Adrenal gland (tissue), 19 donors: ENCODE measurements at regions of chr5 and their contacts with region 1.

Region 1: GRCh38 chr5:16791036-16791705 is 144.9 kb downstream of the MYO10 start:
- DNase-seq: peak in 3 of 7 donors; percentile 33 to 44 (median 35)
- H3K4me3 ChIP-seq: no peak overlapping the region
- H3K27ac ChIP-seq: no peak overlapping the region
- H3K4me1 ChIP-seq: no peaks in the 10 kb centered on the region
- H3K27me3 ChIP-seq: no peaks in the 10 kb centered on the region
- CTCF ChIP-seq: peak; percentile 63 to 83 (median 71)
- POLR2A ChIP-seq: no peak

Region 2: DNA sequence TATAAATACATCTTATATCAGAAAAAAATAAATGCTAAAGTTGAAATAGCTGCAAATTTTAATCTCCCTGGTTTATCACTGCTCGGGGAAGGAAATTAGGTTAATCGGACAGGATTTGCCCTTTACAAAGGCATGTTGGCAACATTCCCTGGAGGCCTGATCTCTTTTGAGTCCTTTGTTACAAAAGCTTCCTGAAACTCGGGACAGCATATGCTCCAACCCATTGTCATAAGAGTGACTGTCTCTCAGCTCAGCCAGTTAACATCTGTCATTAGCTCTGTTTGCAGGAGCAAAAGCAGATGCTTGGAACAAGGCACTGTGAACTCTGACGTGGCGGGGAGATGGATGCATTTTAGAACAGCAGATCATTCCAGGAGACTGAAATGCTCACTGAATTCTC is 64.3 kb after region 1 on chr5:
- intact Hi-C with region 1: no loop called
- DNase-seq: peak; percentile 21 to 68 (median 42)
- H3K4me3 ChIP-seq: no peak overlapping the region
- H3K27ac ChIP-seq: no peak overlapping the region
- H3K4me1 ChIP-seq: peaks cover 0 to 13% of the 10 kb centered on the region in 2 donors
- H3K27me3 ChIP-seq: no peaks in the 10 kb centered on the region
- CTCF ChIP-seq: no peak
- POLR2A ChIP-seq: no peak

Region 3: DNA sequence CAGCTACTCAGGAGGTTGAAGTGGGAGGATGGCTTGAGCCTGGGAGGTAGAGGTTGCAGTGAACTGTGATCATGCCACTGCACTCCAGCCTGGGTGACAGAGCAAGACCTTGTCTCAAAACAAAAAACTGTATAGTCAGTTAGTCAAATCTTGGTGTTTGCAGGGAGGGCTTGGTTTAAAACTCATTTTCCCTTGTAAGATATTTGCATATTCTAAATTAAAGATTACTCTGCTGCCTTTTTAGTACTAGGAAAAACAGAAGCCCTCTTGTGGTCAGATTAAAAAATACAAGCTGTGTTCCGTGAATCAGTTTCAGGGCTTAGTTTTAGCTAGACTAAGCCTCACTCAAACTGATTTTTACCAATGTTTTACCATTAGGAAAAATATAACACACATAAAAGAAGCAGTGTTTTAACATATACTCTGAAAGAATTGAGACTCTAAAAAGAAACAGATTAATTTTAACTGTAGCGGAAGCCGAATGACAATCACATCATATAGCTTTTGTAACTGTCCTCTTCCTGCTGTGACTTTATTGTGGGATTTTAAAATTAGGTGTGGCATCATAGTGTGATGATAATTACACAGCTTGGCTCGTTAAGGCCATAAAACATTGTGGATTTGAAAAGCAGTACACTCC is 341.4 kb after region 1 on chr5:
- intact Hi-C with region 1: loop called in 1 of 2 experiments (anchors 5 kb)
- DNase-seq: no peak
- H3K4me3 ChIP-seq: no peak overlapping the region
- H3K27ac ChIP-seq: no peak overlapping the region
- H3K4me1 ChIP-seq: no peaks in the 10 kb centered on the region
- H3K27me3 ChIP-seq: no peaks in the 10 kb centered on the region
- CTCF ChIP-seq: peak; percentile 58 to 78 (median 64)
- POLR2A ChIP-seq: no peak

Region 4: GRCh38 chr5:17189381-17190036 is 398.3 kb after region 1 on chr5:
- intact Hi-C with region 1: loop called in 1 of 2 experiments (anchors 5 kb)
- DNase-seq: peak; percentile 39 to 86 (median 71)
- H3K4me3 ChIP-seq: no peak overlapping the region
- H3K27ac ChIP-seq: peak overlapping the region in 1 of 5 donors; percentile 37
- H3K4me1 ChIP-seq: peaks cover 7 to 9% of the 10 kb centered on the region in 2 donors
- H3K27me3 ChIP-seq: no peaks in the 10 kb centered on the region
- CTCF ChIP-seq: peak; percentile 42 to 82 (median 70)
- POLR2A ChIP-seq: no peak